ENCODE measurements at regions of chr14 and their contacts with region 1.

Region 1: GRCh38 chr14:24036169-24036962 is 15.4 kb upstream of the CARMIL3 start:
- DNase-seq: peak; percentile 83 to 89
- ATAC-seq: peak; percentile 82 to 90 (median 84)
- H3K4me3 ChIP-seq: peak overlapping the region; percentile 78
- H3K27ac ChIP-seq: peak overlapping the region; percentile 87
- H3K4me1 ChIP-seq: peaks cover 15% of the 10 kb centered on the region
- H3K27me3 ChIP-seq: no peaks in the 10 kb centered on the region
- CTCF ChIP-seq: peak; percentile 70

Region 2: GRCh38 chr14:23984891-23985602 is 51.3 kb before region 1 on chr14:
- intact Hi-C with region 1: loop called (anchors 5 kb)
- DNase-seq: no peak
- ATAC-seq: peak; percentile 33 to 56 (median 46)
- H3K4me3 ChIP-seq: no peak overlapping the region
- H3K27ac ChIP-seq: peak overlapping the region; percentile 71
- H3K4me1 ChIP-seq: peaks cover 19% of the 10 kb centered on the region
- H3K27me3 ChIP-seq: no peaks in the 10 kb centered on the region
- CTCF ChIP-seq: no peak

Region 3: GRCh38 chr14:24013654-24014514 is 22.5 kb before region 1 on chr14:
- intact Hi-C with region 1: loop called in 1 of 2 experiments (anchors 2 kb)
- DNase-seq: no peak
- ATAC-seq: peak; percentile 84 to 93 (median 92)
- H3K4me3 ChIP-seq: peak overlapping the region; percentile 4
- H3K27ac ChIP-seq: no peak overlapping the region
- H3K4me1 ChIP-seq: peaks cover 4% of the 10 kb centered on the region
- H3K27me3 ChIP-seq: no peaks in the 10 kb centered on the region
- CTCF ChIP-seq: peak; percentile 91

Region 4: DNA sequence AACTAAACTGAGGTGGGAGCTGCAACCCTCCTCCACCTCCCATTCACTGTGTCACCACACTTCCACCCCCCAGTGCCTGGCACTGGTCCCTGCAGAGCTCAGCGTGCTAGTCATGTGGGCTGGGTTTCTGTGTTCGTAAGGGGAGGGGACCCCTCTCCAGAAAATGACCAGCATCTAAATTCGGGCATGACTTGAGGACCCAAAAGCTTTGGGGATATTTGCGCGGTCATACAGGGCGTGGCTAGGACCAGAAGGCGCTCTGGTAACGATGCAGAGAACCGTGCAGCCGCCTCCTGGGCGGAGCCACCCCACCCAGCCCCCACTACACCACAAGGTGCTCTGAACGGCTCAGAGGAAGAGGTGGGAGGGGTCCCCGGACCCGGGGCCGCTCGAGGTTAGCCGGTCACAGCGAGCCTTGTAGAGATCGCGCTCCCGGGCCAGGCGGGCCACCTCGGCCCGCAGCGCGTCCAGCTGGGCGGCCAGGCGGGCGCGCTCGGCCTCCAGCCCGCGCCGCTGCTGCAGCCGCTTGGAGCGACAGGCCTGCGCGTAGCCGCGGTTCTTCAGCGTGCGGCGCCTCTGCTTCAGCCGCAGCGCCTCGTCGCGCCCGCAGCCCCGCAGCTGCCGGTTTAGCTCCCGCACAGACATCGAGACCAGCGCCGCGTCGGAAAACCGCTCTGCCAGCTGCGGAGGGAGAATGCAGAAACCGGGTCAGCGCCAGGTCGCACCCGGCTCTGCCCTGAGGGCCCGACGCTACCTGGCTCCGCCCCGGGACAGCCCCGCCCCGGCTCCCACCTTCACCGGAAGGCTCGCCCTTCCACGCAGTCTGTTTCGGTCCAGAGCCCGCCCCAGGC is 44.7 kb after region 1 on chr14:
- intact Hi-C with region 1: no loop called
- DNase-seq: peak; percentile 41 to 69
- ATAC-seq: peak; percentile 65 to 83 (median 76)
- H3K4me3 ChIP-seq: peak overlapping the region; percentile 77
- H3K27ac ChIP-seq: no peak overlapping the region
- H3K4me1 ChIP-seq: peaks cover 5% of the 10 kb centered on the region
- H3K27me3 ChIP-seq: no peaks in the 10 kb centered on the region
- CTCF ChIP-seq: no peak

Measured in psoas muscle (tissue), 8 donors.